Common myeloid progenitor, CD34-positive (primary cell): ENCODE measurements at regions of chr15 and their contacts with region 1.

Region 1: GRCh38 chr15:74144153-74144775 is 13.9 kb downstream of the ISLR2 start:
- DNase-seq: peak in 2 of 3 donors; percentile 44 to 48
- H3K4me3 ChIP-seq: no peak overlapping the region
- H3K27ac ChIP-seq: no peak overlapping the region
- H3K4me1 ChIP-seq: no peaks in the 10 kb centered on the region
- H3K27me3 ChIP-seq: peaks cover 9 to 43% (median 10%) of the 10 kb centered on the region in 5 experiments

Region 2: GRCh38 chr15:74156678-74157411 is 12.6 kb after region 1 on chr15:
- CTCF ChIA-PET with region 1: interaction called, 14 read pairs
- POLR2A ChIA-PET with region 1: no interaction called
- DNase-seq: peak in 2 of 3 donors; percentile 42 to 52
- H3K4me3 ChIP-seq: no peak overlapping the region
- H3K27ac ChIP-seq: no peak overlapping the region
- H3K4me1 ChIP-seq: peaks cover 0 to 6% (median 2%) of the 10 kb centered on the region in 4 experiments
- H3K27me3 ChIP-seq: peaks cover 0 to 4% (median 0%) of the 10 kb centered on the region in 5 experiments